ENCODE measurements at regions of chr20 and their contacts with region 1.

Region 1: GRCh38 chr20:62595491-62595890 is 46.8 kb upstream of the SLCO4A1 start:
- DNase-seq: peak; percentile 61
- H3K4me3 ChIP-seq: no peak overlapping the region
- H3K27ac ChIP-seq: no peak overlapping the region
- H3K4me1 ChIP-seq: peaks cover 0 to 14% (median 3%) of the 10 kb centered on the region in 4 donors
- H3K27me3 ChIP-seq: peaks cover 55% of the 10 kb centered on the region
- CTCF ChIP-seq: no peak
- EP300 ChIP-seq: no peak
- POLR2A ChIP-seq: no peak

Region 2: DNA sequence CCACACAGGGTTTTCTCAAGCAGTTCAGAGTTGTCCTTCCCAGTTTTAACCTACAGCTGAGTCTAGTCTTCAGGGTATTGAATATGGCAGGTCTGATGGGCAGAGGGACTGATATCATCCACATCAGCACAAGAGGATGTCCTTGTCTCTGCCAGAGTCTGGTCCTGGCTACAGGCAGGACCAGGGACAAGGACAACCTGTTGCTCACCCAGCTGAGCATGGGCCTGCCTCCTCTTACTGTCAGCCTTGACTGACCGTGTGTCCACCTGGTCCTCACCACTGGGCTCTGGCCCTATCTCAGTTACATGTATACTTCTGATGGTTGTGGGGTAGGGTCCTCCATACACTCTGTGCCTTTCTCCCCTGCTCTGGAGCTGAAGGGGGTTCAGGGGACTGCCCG is 1441.3 kb before region 1 on chr20:
- in situ Hi-C with region 1: no loop called
- intact Hi-C with region 1: no loop called
- DNase-seq: no peak
- H3K4me3 ChIP-seq: no peak overlapping the region
- H3K27ac ChIP-seq: no peak overlapping the region
- H3K4me1 ChIP-seq: no peaks in the 10 kb centered on the region
- H3K27me3 ChIP-seq: no peaks in the 10 kb centered on the region
- CTCF ChIP-seq: no peak
- EP300 ChIP-seq: no peak
- POLR2A ChIP-seq: no peak

Region 3: GRCh38 chr20:63544958-63545534 is 949.6 kb after region 1 on chr20:
- in situ Hi-C with region 1: no loop called
- intact Hi-C with region 1: no loop called
- DNase-seq: peak; percentile 78
- H3K4me3 ChIP-seq: no peak overlapping the region
- H3K27ac ChIP-seq: peak overlapping the region; percentile 30 to 69 (median 58)
- H3K4me1 ChIP-seq: peaks cover 5 to 41% (median 27%) of the 10 kb centered on the region in 4 donors
- H3K27me3 ChIP-seq: peaks cover 39% of the 10 kb centered on the region
- CTCF ChIP-seq: no peak
- EP300 ChIP-seq: peak; percentile 23
- POLR2A ChIP-seq: no peak

Region 4: GRCh38 chr20:63734111-63734945 is 1138.8 kb after region 1 on chr20:
- in situ Hi-C with region 1: no loop called
- intact Hi-C with region 1: loop called (anchors 5 kb)
- DNase-seq: no peak
- H3K4me3 ChIP-seq: no peak overlapping the region
- H3K27ac ChIP-seq: no peak overlapping the region
- H3K4me1 ChIP-seq: peaks cover 28 to 38% (median 34%) of the 10 kb centered on the region in 4 donors
- H3K27me3 ChIP-seq: no peaks in the 10 kb centered on the region
- CTCF ChIP-seq: no peak
- EP300 ChIP-seq: no peak
- POLR2A ChIP-seq: no peak